ENCODE measurements at regions of chr7 and their contacts with region 1.

Region 1: DNA sequence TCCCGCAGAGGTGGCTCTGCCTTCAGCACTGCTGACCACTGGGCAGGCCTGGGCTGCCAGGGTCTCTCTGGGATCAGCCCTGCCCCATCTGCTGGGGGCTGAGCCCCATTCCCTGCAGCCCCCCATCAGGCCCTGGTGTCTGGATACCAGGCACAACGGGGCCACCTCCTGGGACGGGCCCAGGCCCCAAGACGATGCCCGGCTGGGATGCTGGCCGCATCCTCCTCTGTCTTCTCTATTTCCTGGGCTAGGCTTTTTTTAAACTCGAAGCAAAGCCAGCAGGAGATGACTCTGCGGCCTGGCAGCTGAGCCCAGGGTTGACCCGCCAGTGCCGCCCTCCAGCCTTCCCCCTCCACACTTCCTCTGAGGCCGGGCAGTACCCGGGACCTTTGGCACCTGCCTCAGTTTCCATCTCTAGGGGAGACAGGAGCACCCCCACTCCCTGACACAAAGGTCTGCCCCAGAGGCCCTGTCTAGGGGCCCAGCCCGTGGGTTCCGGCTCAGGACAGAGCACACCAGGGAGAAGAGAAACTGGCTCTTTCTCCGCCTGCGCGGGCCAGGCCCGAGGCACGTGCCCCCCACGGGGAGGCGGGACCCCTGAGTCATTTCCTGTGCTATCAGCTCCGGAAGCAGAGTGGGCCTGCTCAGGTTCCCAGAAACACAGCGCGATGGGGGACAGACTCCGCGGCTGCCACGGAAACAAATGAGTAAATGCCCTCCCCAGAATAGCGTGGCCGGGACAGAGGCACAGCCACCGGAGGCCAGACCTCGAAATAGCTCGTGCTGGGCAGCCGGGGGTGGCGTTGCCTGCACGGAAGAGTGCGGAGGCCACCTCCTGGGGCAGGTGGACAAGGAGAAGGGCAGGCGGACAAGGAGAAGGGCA is 84.6 kb upstream of the PDGFA start:
- DNase-seq: peak; percentile 97
- ATAC-seq: peak; percentile 59
- H3K4me3 Mint-ChIP-seq: peak overlapping the region; percentile 78
- H3K27ac Mint-ChIP-seq: peak overlapping the region; percentile 100
- H3K4me1 Mint-ChIP-seq: peaks cover 68% of the 10 kb centered on the region
- H3K27me3 Mint-ChIP-seq: no peaks in the 10 kb centered on the region

Region 2: GRCh38 chr7:518630-519483 is 85.4 kb before region 1 on chr7:
- CTCF ChIA-PET with region 1: no interaction called
- POLR2A ChIA-PET with region 1: no interaction called
- intact Hi-C with region 1: loop called (anchors 5 kb)
- DNase-seq: peak; percentile 75
- ATAC-seq: peak; percentile 42
- H3K4me3 Mint-ChIP-seq: peak overlapping the region; percentile 73
- H3K27ac Mint-ChIP-seq: no peak overlapping the region
- H3K4me1 Mint-ChIP-seq: peaks cover 16% of the 10 kb centered on the region
- H3K27me3 Mint-ChIP-seq: peaks cover 37% of the 10 kb centered on the region

Region 3: DNA sequence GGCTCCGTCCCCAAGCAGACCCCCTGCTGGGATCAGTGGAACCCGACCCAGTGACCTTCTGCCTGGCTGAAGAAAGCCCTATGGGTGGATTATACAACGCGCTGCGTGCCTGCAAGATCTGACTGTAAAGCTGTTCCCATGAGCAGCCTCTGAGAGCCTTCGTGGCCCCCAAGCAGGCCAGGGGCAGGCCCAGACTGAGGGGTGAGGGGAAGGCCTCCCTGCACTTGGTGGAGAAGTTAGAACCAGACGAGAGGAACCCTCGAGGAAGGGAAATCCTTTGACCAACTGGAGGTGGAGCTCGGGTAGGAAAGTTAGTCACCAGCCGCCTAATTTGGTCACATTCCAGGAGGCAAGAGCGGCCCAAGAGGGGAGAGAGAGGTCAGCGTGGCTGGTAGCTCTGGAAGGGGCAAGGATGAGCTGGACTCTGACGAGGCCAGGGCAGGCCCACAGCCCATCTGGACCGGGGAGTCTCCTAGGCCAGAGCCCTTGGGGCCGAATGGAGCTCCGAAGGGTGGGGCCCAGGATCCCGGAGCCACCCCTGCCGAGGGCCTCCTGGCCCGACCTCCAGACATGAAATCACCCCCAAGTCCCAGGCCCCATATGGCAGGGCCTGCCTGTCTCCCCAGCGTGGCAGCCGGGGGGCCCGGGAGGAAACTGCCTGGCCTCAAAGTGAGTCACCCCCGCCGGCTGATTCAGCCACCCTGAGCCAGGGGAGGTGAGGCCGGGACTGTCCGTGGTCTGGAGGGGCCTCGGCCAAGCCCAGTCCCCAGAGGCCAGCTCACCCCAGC is 61.3 kb before region 1 on chr7:
- CTCF ChIA-PET with region 1: no interaction called
- POLR2A ChIA-PET with region 1: no interaction called
- intact Hi-C with region 1: no loop called
- DNase-seq: peak; percentile 54
- ATAC-seq: peak; percentile 85
- H3K4me3 Mint-ChIP-seq: no peak overlapping the region
- H3K27ac Mint-ChIP-seq: no peak overlapping the region
- H3K4me1 Mint-ChIP-seq: peaks cover 5% of the 10 kb centered on the region
- H3K27me3 Mint-ChIP-seq: no peaks in the 10 kb centered on the region

Region 4: DNA sequence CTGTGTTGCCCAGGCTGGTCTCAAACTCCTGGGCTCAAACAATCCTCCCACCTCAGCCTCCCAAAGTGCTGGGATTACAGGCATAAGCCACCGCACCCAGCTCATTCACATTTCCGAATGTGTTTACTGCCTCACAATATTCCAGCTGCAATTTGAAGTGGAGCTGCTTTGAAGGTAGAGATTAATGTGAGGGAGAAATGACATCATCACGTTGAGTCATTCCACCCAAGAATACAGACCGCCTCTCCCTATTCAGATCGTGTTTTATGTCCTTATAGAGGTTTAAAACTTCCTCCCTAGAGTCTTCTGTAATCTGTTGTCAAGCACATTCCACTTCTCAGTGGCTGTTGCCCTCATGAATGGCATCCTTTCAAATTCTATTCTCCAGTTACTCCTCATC is 15.8 kb after region 1 on chr7:
- CTCF ChIA-PET with region 1: interaction called, 7 read pairs
- POLR2A ChIA-PET with region 1: interaction called, 5 read pairs
- intact Hi-C with region 1: loop called (anchors 1 to 2 kb)
- DNase-seq: no peak
- ATAC-seq: peak; percentile 52
- H3K4me3 Mint-ChIP-seq: no peak overlapping the region
- H3K27ac Mint-ChIP-seq: peak overlapping the region; percentile 100
- H3K4me1 Mint-ChIP-seq: peaks cover 54% of the 10 kb centered on the region
- H3K27me3 Mint-ChIP-seq: no peaks in the 10 kb centered on the region

Region 5: GRCh38 chr7:726084-726853 is 122.0 kb after region 1 on chr7 and contains the start of gene DNAAF5:
- CTCF ChIA-PET with region 1: no interaction called
- POLR2A ChIA-PET with region 1: no interaction called
- intact Hi-C with region 1: loop called (anchors 1 to 5 kb)
- DNase-seq: peak; percentile 93
- ATAC-seq: peak; percentile 89
- H3K4me3 Mint-ChIP-seq: peak within 1 kb of the TSS; percentile 83
- H3K27ac Mint-ChIP-seq: peak within 1 kb of the TSS; percentile 90
- H3K4me1 Mint-ChIP-seq: peaks cover 26% of the 10 kb centered on the region
- H3K27me3 Mint-ChIP-seq: no peaks in the 10 kb centered on the region
- total RNA-seq, gene DNAAF5: 31.5 to 37.2 TPM

Region 6: DNA sequence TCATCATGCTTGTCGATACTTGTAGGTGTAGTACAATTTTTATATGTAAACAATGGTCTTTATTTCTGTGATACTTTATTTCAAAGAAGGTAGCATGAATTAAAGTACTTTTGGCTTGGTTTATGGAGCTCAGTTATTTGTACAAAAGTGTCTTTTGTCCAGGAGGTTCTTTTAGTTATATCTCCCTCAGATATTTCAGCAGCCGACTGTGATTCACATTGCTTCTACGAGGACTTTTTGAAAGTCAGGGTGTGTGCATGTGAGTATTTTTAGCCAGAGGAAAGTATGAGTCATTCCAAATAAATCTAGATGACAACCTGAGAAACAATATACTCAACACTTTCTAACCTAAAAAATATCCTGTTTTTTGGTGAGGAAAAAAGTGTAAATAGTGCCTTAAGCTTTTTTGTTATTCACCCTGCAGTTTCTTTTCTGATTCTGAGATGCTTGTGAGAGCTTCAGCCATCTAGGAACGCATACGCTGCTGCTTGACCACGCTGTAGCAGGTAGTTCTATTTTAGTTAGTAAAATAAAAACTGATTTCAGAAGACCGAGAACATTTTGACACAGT is 227.4 kb after region 1 on chr7:
- CTCF ChIA-PET with region 1: no interaction called
- POLR2A ChIA-PET with region 1: no interaction called
- intact Hi-C with region 1: loop called in 1 of 2 experiments (anchors 1 kb)
- DNase-seq: no peak
- ATAC-seq: peak; percentile 69
- H3K4me3 Mint-ChIP-seq: peak overlapping the region; percentile 63
- H3K27ac Mint-ChIP-seq: peak overlapping the region; percentile 98
- H3K4me1 Mint-ChIP-seq: peaks cover 64% of the 10 kb centered on the region
- H3K27me3 Mint-ChIP-seq: no peaks in the 10 kb centered on the region

Region 7: GRCh38 chr7:945556-946255 is 341.5 kb after region 1 on chr7:
- CTCF ChIA-PET with region 1: no interaction called
- POLR2A ChIA-PET with region 1: no interaction called
- intact Hi-C with region 1: no loop called
- DNase-seq: no peak
- ATAC-seq: no peak
- H3K4me3 Mint-ChIP-seq: no peak overlapping the region
- H3K27ac Mint-ChIP-seq: no peak overlapping the region
- H3K4me1 Mint-ChIP-seq: peaks cover 14% of the 10 kb centered on the region
- H3K27me3 Mint-ChIP-seq: no peaks in the 10 kb centered on the region

Region 8: GRCh38 chr7:1044191-1045068 is 440.2 kb after region 1 on chr7 and contains the start of gene GPR146:
- CTCF ChIA-PET with region 1: no interaction called
- POLR2A ChIA-PET with region 1: no interaction called
- intact Hi-C with region 1: loop called in 1 of 2 experiments (anchors 10 kb)
- DNase-seq: peak; percentile 96
- ATAC-seq: peak; percentile 88
- H3K4me3 Mint-ChIP-seq: peak within 1 kb of the TSS; percentile 78
- H3K27ac Mint-ChIP-seq: peak within 1 kb of the TSS; percentile 73
- H3K4me1 Mint-ChIP-seq: peaks cover 61% of the 10 kb centered on the region
- H3K27me3 Mint-ChIP-seq: no peaks in the 10 kb centered on the region
- total RNA-seq, gene GPR146: 4.7 to 5.6 TPM

Region 9: GRCh38 chr7:2403014-2403717 is 1798.9 kb after region 1 on chr7 and contains the start of gene CHST12:
- CTCF ChIA-PET with region 1: no interaction called
- POLR2A ChIA-PET with region 1: no interaction called
- intact Hi-C with region 1: loop called in 1 of 2 experiments (anchors 5 kb)
- DNase-seq: peak; percentile 97
- ATAC-seq: peak; percentile 70
- H3K4me3 Mint-ChIP-seq: peak within 1 kb of the TSS; percentile 79
- H3K27ac Mint-ChIP-seq: no peak within 1 kb of the TSS
- H3K4me1 Mint-ChIP-seq: peaks cover 41% of the 10 kb centered on the region
- H3K27me3 Mint-ChIP-seq: peaks cover 6% of the 10 kb centered on the region
- total RNA-seq, gene CHST12: 1.8 to 1.9 TPM

Measured in activated CD4-positive, alpha-beta T cell treated with anti-CD3 and anti-CD28 coated beads for 36 hours (primary cell).